ENCODE measurements at regions of chr16 and their contacts with region 1.

Region 1: DNA sequence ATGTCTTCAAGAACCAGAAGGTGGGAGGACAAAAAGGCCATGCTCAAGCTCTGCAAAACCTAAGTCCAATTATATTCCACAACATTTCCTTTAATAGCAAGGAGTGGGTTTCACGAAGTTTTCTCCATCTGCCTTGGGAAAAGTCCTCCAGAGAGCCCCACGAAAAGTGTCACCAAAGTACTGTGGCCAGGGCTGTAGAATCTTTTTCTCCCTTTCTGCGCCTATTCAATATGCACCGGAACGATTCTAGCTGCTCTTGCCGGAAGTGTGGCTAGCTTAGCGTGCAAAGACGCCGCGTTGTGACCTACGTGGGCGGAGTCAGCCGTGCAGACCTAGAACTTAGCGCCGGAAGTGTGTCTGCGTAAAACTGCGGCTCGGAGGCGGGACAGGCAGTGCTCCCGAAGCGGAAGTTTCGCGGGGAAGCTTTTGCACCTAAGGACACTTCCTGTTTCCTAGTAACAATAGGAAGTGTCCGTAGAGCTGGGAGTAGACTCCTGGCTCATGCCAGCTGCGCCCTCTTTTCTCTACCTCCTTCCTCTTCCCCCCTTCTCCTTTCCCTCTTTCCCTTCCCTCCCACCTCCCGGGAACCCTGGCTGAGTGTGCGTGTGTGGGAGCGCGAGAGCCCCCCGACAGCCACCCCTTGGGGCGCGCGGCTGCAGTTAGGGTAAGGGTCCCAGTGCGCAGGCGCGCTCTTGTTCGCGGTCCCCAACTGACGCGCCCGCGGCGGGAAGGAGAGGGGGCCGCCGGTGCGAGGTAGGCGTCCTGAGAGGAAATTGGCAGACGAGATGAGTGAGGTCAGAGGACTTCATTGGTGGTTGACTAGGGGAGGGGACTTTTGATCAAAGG is at the starts of genes ZNF646 and ZNF668:
- DNase-seq: peak; percentile 94 to 100 (median 97)
- ATAC-seq: peak; percentile 82
- H3K4me3 ChIP-seq: peak within 1 kb of the TSS; percentile 67 to 83
- H3K4me3 Mint-ChIP-seq: peak within 1 kb of the TSS; percentile 96
- H3K27ac ChIP-seq: peak within 1 kb of the TSS; percentile 88 to 95
- H3K27ac Mint-ChIP-seq: peak within 1 kb of the TSS; percentile 97
- H3K4me1 ChIP-seq: peaks cover 27% of the 10 kb centered on the region
- H3K4me1 Mint-ChIP-seq: peaks cover 40% of the 10 kb centered on the region
- H3K27me3 ChIP-seq: no peaks in the 10 kb centered on the region
- H3K27me3 Mint-ChIP-seq: no peaks in the 10 kb centered on the region
- CTCF ChIP-seq: no peak
- total RNA-seq, gene ZNF646: 16.6 to 18.7 TPM
- total RNA-seq, gene ZNF668: 10.1 to 11.1 TPM

Region 2: GRCh38 chr16:29784901-29785500 is 1289.2 kb before region 1 on chr16:
- CTCF ChIA-PET with region 1: no interaction called
- POLR2A ChIA-PET with region 1: no interaction called
- intact Hi-C with region 1: loop called in 1 of 2 experiments (anchors 5 kb)
- DNase-seq: peak; percentile 61 to 87 (median 78)
- ATAC-seq: peak; percentile 89
- H3K4me3 ChIP-seq: peak overlapping the region; percentile 21 to 34
- H3K4me3 Mint-ChIP-seq: peak overlapping the region; percentile 75
- H3K27ac ChIP-seq: peak overlapping the region in 1 of 2 experiments; percentile 4
- H3K27ac Mint-ChIP-seq: peak overlapping the region; percentile 69
- H3K4me1 ChIP-seq: peaks cover 22% of the 10 kb centered on the region
- H3K4me1 Mint-ChIP-seq: peaks cover 24% of the 10 kb centered on the region
- H3K27me3 ChIP-seq: no peaks in the 10 kb centered on the region
- H3K27me3 Mint-ChIP-seq: no peaks in the 10 kb centered on the region
- CTCF ChIP-seq: peak; percentile 76

Region 3: GRCh38 chr16:30957456-30958174 is 116.6 kb before region 1 on chr16 and contains the start of gene SETD1A:
- CTCF ChIA-PET with region 1: interaction called, 3 read pairs
- POLR2A ChIA-PET with region 1: interaction called, 5 read pairs
- intact Hi-C with region 1: loop called (anchors 1 kb)
- DNase-seq: peak; percentile 91 to 99 (median 98)
- ATAC-seq: peak; percentile 86
- H3K4me3 ChIP-seq: peak within 1 kb of the TSS; percentile 88 to 97
- H3K4me3 Mint-ChIP-seq: peak within 1 kb of the TSS; percentile 95
- H3K27ac ChIP-seq: peak within 1 kb of the TSS; percentile 93 to 98
- H3K27ac Mint-ChIP-seq: peak within 1 kb of the TSS; percentile 98
- H3K4me1 ChIP-seq: peaks cover 27% of the 10 kb centered on the region
- H3K4me1 Mint-ChIP-seq: peaks cover 31% of the 10 kb centered on the region
- H3K27me3 ChIP-seq: no peaks in the 10 kb centered on the region
- H3K27me3 Mint-ChIP-seq: no peaks in the 10 kb centered on the region
- CTCF ChIP-seq: no peak
- total RNA-seq, gene SETD1A: 43.6 to 48.3 TPM

Region 4: DNA sequence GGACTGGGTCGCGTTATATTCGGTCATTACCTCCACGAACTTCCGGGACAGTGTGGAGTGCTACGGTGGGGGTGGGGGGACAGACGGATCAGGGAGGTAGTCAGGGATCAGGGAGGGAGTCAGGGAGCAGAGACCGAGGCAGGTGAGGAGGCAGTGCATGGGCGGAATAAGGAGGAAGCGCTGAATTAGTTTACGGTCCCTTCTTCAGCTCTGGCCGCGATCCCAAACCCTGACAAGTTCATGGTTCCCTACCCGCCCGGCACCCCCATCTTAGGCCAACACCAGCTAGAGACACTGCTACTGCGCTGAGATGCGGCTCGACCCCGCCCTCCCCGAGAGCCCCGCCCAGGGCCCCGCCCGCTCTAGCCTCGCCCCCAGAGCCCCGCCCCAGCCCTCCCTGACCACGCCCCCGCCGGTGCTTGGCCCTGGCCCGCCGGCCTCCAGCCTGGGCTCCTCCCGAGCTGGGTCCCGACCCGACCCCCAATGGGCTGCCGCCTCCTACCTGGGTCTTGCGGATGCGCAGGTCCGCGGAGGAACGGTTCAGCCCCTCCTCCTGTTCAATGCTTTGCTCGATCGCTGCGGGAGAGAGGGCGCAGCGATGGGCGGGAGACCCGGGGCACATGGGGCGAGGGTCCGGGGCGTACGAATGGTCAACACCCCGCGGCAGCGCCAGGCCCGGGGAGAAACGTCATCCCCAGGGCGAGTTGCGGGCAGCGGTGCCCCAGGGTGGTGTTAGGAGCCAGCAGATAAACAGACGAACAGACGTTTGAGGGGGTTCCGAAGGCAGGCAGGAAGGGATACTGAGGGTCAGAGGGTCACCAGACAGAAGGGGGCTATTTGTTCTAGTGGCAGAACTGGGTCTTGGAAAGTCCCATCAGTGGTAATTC is 76.9 kb before region 1 on chr16:
- CTCF ChIA-PET with region 1: no interaction called
- POLR2A ChIA-PET with region 1: no interaction called
- intact Hi-C with region 1: loop called (anchors 1 to 2 kb)
- DNase-seq: peak; percentile 67 to 88 (median 80)
- ATAC-seq: peak; percentile 99
- H3K4me3 ChIP-seq: peak overlapping the region; percentile 61 to 93
- H3K4me3 Mint-ChIP-seq: peak overlapping the region; percentile 85
- H3K27ac ChIP-seq: peak overlapping the region; percentile 40 to 55
- H3K27ac Mint-ChIP-seq: peak overlapping the region; percentile 90
- H3K4me1 ChIP-seq: peaks cover 11% of the 10 kb centered on the region
- H3K4me1 Mint-ChIP-seq: peaks cover 10% of the 10 kb centered on the region
- H3K27me3 ChIP-seq: no peaks in the 10 kb centered on the region
- H3K27me3 Mint-ChIP-seq: no peaks in the 10 kb centered on the region
- CTCF ChIP-seq: no peak

Region 5: DNA sequence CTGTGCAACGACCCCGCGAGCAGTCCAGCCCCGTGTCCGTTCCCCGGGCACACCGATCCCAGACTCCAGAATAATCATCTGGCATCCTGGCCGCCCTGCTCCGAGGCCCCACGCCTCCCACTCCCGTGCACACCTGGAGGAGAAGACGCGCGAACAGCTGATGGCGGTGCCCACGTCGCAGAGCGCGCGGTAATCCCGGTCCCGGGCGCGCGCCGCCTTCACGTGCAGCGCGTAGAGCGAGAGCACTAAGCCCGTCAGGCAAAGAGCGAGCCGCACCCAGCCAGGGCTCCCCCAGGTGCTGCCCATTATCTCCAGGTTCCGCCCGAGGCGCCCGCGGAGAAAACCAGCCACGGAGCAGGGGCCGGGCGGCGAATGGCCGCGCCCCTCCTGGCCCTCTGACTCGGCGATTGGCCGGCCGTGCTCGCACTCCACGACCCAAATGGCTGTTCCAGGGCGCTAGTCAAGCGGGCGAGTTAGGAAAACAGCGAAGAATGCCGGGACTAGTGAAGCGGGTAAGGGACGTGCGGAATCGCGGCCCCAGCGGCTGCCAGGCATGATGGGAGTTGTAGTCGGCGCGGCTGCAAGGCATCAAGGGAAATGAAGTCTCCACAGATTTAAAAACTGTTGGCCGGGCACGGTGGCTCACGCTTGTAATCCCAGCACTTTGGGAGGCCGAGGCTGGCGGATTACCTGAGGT is 20.4 kb after region 1 on chr16 and contains the start of gene VKORC1:
- CTCF ChIA-PET with region 1: interaction called, 3 read pairs
- POLR2A ChIA-PET with region 1: interaction called, 9 read pairs
- intact Hi-C with region 1: loop called (anchors 1 kb)
- DNase-seq: peak; percentile 65 to 93 (median 85)
- ATAC-seq: peak; percentile 86
- H3K4me3 ChIP-seq: peak within 1 kb of the TSS; percentile 72 to 91
- H3K4me3 Mint-ChIP-seq: peak within 1 kb of the TSS; percentile 93
- H3K27ac ChIP-seq: peak within 1 kb of the TSS; percentile 69 to 74
- H3K27ac Mint-ChIP-seq: peak within 1 kb of the TSS; percentile 91
- H3K4me1 ChIP-seq: peaks cover 19% of the 10 kb centered on the region
- H3K4me1 Mint-ChIP-seq: peaks cover 25% of the 10 kb centered on the region
- H3K27me3 ChIP-seq: no peaks in the 10 kb centered on the region
- H3K27me3 Mint-ChIP-seq: no peaks in the 10 kb centered on the region
- CTCF ChIP-seq: no peak
- total RNA-seq, gene VKORC1: 23.0 to 27.2 TPM

Region 6: GRCh38 chr16:31117391-31118197 is 43.4 kb after region 1 on chr16 and contains the start of gene KAT8:
- CTCF ChIA-PET with region 1: no interaction called
- POLR2A ChIA-PET with region 1: interaction called, 30 read pairs
- intact Hi-C with region 1: loop called (anchors 1 kb)
- DNase-seq: peak; percentile 92 to 99 (median 97)
- ATAC-seq: peak; percentile 92
- H3K4me3 ChIP-seq: peak within 1 kb of the TSS; percentile 53 to 93
- H3K4me3 Mint-ChIP-seq: peak within 1 kb of the TSS; percentile 74
- H3K27ac ChIP-seq: peak within 1 kb of the TSS; percentile 83 to 96
- H3K27ac Mint-ChIP-seq: peak within 1 kb of the TSS; percentile 95
- H3K4me1 ChIP-seq: peaks cover 11% of the 10 kb centered on the region
- H3K4me1 Mint-ChIP-seq: peaks cover 18% of the 10 kb centered on the region
- H3K27me3 ChIP-seq: no peaks in the 10 kb centered on the region
- H3K27me3 Mint-ChIP-seq: no peaks in the 10 kb centered on the region
- CTCF ChIP-seq: no peak
- total RNA-seq, gene KAT8: 105 to 107 TPM

Region 7: DNA sequence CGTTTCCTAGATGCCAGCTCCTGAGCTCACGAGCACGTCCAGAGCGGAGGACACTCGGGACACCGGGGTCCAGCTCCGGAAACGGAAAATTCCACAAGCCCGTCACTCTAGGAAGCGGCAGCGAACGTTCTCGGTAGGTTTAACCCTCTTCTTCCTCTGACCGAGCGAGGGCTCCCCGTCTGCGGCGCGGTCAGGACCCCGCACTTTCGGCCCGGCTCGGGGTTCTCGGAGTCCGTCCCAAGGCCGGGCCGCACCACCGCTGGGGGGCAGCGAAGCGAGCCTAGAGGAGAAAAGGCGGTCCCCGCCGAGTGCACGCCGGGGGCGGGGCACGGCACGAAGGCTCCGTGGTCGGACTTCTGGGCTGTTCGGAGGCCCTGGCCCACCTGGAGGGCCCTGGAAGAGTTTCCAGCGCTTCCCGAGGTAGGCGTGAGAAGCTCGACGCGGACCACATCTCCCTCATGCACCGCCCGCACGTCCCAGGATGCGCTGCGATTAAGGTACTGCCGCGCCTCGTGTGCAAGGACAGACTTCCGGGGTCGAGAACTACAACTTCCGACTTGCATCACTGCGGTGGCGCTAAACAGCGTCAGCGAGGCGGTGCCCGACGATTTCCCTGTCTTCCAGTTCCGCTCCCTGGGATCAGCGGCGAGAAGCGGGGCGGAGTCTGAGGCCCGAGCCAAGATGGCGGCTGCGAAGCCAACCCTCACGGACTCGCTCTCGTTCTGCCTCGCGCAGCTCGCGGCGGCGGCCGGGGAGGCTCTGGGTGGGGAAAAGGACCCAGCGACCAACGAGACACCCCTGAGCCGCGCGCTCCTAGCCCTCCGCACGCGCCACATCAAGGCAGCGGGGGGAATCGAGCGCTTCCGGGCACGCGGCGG is 384.9 kb after region 1 on chr16 and contains the start of gene ARMC5:
- CTCF ChIA-PET with region 1: no interaction called
- POLR2A ChIA-PET with region 1: interaction called, 8 read pairs
- intact Hi-C with region 1: loop called in 1 of 2 experiments (anchors 1 kb)
- DNase-seq: peak; percentile 91 to 99 (median 96)
- ATAC-seq: peak; percentile 69
- H3K4me3 ChIP-seq: peak within 1 kb of the TSS; percentile 73 to 99
- H3K4me3 Mint-ChIP-seq: peak within 1 kb of the TSS; percentile 95
- H3K27ac ChIP-seq: peak within 1 kb of the TSS; percentile 97 to 100
- H3K27ac Mint-ChIP-seq: peak within 1 kb of the TSS; percentile 99
- H3K4me1 ChIP-seq: peaks cover 40% of the 10 kb centered on the region
- H3K4me1 Mint-ChIP-seq: peaks cover 50% of the 10 kb centered on the region
- H3K27me3 ChIP-seq: no peaks in the 10 kb centered on the region
- H3K27me3 Mint-ChIP-seq: no peaks in the 10 kb centered on the region
- CTCF ChIP-seq: peak; percentile 44
- total RNA-seq, gene ARMC5: 22.4 to 24.0 TPM